Activated CD8-positive, alpha-beta T cell treated with anti-CD3 and anti-CD28 coated beads for 36 hours (primary cell): ENCODE measurements at regions of chr1 and their contacts with region 1.

Region 1: DNA sequence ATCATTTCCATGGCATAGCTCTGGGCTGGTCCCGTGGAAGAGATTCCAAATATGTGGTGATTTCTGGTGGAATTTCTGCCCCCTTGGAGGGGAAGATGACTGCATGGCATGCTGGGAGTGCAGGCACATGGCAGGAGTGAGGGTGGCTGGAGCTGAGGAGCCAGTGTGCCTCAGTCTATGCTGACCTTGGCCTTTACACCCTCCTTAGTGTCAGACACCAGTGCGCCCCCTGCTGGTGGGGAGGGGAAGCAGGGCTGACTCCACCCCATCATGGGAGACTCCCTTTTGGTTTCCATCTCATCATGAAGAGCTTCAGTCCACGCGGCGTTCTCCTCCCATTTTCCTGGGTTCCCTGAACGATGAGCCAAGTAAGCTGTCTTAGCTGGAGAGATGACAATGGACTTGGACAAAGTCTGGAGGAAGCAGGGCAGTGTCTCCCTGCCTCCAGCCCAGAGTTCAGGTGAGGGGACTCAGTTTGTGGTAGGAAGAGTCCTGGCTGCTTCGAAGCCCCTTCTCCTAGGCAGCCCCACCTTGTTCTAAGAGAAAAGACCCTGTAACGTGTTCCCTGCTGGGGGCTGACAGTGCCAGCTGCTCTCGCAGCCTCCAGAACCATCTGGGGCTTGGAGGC is 10.3 kb downstream of the ALX3 start:
- DNase-seq: peak; percentile 84
- ATAC-seq: peak; percentile 96
- H3K4me3 Mint-ChIP-seq: no peak overlapping the region
- H3K27ac Mint-ChIP-seq: no peak overlapping the region
- H3K4me1 Mint-ChIP-seq: no peaks in the 10 kb centered on the region
- H3K27me3 Mint-ChIP-seq: no peaks in the 10 kb centered on the region
- CTCF ChIP-seq: peak; percentile 96

Region 2: DNA sequence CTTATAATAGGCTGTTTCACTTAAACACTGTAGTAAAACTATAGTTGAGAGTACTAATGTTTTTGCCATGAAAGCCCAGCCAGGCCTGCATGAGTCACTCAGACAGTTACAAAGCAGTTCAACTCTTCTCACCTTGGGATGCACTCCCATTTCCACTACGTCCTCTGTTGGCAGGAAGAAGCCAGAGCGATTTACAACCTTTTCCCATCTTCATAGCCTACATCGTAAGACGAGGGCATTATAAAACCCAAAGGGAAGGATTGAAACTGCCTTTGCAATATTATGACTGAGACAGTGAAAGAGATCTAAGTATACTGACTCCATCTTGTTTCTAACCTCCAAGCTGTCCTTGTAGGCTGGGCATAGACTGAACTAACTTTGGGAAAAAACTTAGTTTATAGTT is 221.3 kb before region 1 on chr1:
- CTCF ChIA-PET with region 1: no interaction called
- POLR2A ChIA-PET with region 1: no interaction called
- intact Hi-C with region 1: no loop called
- DNase-seq: no peak
- ATAC-seq: no peak
- H3K4me3 Mint-ChIP-seq: no peak overlapping the region
- H3K27ac Mint-ChIP-seq: no peak overlapping the region
- H3K4me1 Mint-ChIP-seq: no peaks in the 10 kb centered on the region
- H3K27me3 Mint-ChIP-seq: no peaks in the 10 kb centered on the region
- CTCF ChIP-seq: no peak

Region 3: DNA sequence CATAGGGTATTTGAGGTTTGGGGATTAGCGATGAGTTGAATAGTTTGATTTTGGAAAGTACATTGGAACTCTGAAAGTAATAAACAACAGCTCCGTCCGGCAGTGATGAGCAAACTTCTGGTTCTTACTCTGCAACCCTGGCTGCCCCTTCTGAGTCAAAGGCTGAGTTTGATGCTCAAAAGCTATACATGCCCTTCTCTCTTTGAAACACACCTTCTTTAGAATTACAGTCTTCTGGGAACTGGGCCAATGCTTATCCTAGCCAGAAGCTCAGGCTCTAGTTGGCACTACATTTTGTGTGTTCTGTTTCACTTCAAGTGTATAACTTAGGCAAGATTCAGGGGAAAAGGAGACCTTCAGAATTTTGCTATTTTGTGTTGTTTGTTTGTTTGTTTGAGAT is 66.3 kb before region 1 on chr1:
- CTCF ChIA-PET with region 1: no interaction called
- POLR2A ChIA-PET with region 1: no interaction called
- intact Hi-C with region 1: no loop called
- DNase-seq: no peak
- ATAC-seq: no peak
- H3K4me3 Mint-ChIP-seq: no peak overlapping the region
- H3K27ac Mint-ChIP-seq: no peak overlapping the region
- H3K4me1 Mint-ChIP-seq: peaks cover 21% of the 10 kb centered on the region
- H3K27me3 Mint-ChIP-seq: no peaks in the 10 kb centered on the region
- CTCF ChIP-seq: no peak

Region 4: GRCh38 chr1:110040548-110040947 is 19.6 kb before region 1 on chr1:
- CTCF ChIA-PET with region 1: interaction called, 163 read pairs
- POLR2A ChIA-PET with region 1: no interaction called
- intact Hi-C with region 1: no loop called
- DNase-seq: peak; percentile 67
- ATAC-seq: peak; percentile 92
- H3K4me3 Mint-ChIP-seq: no peak overlapping the region
- H3K27ac Mint-ChIP-seq: peak overlapping the region; percentile 59
- H3K4me1 Mint-ChIP-seq: peaks cover 24% of the 10 kb centered on the region
- H3K27me3 Mint-ChIP-seq: no peaks in the 10 kb centered on the region
- CTCF ChIP-seq: no peak

Region 5: GRCh38 chr1:110076789-110077500 is 16.8 kb after region 1 on chr1:
- CTCF ChIA-PET with region 1: interaction called, 40 read pairs
- POLR2A ChIA-PET with region 1: no interaction called
- intact Hi-C with region 1: no loop called
- DNase-seq: no peak
- ATAC-seq: no peak
- H3K4me3 Mint-ChIP-seq: no peak overlapping the region
- H3K27ac Mint-ChIP-seq: no peak overlapping the region
- H3K4me1 Mint-ChIP-seq: no peaks in the 10 kb centered on the region
- H3K27me3 Mint-ChIP-seq: peaks cover 19% of the 10 kb centered on the region
- CTCF ChIP-seq: no peak

Region 6: GRCh38 chr1:110106013-110106941 is 46.1 kb after region 1 on chr1:
- CTCF ChIA-PET with region 1: interaction called, 251 read pairs
- POLR2A ChIA-PET with region 1: no interaction called
- intact Hi-C with region 1: no loop called
- DNase-seq: peak; percentile 69
- ATAC-seq: peak; percentile 94
- H3K4me3 Mint-ChIP-seq: no peak overlapping the region
- H3K27ac Mint-ChIP-seq: no peak overlapping the region
- H3K4me1 Mint-ChIP-seq: no peaks in the 10 kb centered on the region
- H3K27me3 Mint-ChIP-seq: peaks cover 5% of the 10 kb centered on the region
- CTCF ChIP-seq: peak; percentile 82